HCT116 (cell line): ENCODE measurements at regions of chr15 and their contacts with region 1.

Region 1: GRCh38 chr15:84598969-84599368 is 1.8 kb upstream of the ZSCAN2 start:
- DNase-seq: peak; percentile 44
- ATAC-seq: peak; percentile 25; the same call in 1 of the 2 replicates
- H3K4me3 ChIP-seq: no peak overlapping the region
- H3K27ac ChIP-seq: no peak overlapping the region
- H3K4me1 ChIP-seq: peaks cover 2 to 11% of the 10 kb centered on the region in 2 experiments
- H3K27me3 ChIP-seq: no peaks in the 10 kb centered on the region
- CTCF ChIP-seq: peak; percentile 76 to 86 (median 76); a peak in 5 of 6 replicates
- POLR2A ChIP-seq: no peak
- RAD21 ChIP-seq: peak; percentile 88

Region 2: DNA sequence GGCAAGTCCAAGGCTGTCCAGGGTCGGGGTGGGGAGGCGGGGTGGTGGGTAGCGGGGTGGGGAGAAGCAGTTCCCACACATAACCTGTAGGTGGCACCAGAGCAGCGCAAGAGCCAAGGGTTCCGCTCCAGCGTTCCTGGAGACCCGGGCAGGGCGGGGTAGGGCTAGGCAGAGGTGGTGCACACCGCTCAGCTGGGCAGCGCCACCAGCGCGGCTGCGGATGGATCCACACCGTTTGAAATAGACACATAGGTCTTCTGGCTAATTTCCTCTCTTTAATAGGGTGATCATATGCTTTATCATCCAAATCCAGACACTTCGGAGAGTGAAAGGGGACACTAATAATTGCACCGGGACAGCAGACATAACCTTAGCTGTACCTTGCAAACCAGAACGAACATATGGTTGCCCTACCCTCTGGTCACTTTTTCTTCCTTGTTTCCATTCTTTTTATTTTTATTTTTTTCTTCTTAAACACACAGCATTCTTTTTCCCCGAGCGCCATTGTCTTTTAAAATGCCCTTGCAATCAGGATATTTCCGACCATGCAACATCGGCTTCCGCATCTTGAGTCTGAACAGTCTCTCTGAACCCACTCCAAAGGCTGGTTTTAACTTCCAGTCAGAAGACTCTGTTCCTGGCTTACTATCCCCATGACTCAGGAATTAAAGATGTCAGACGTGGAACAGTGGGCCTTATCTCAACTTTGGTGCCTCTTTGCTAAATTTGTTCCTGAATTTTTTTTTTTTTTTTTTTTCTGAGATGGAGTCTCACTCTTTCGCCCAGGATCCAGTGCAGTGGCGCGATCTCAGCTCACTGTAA is 10.7 kb before region 1 on chr15:
- CTCF ChIA-PET with region 1: interaction called, 12 read pairs
- POLR2A ChIA-PET with region 1: no interaction called
- RAD21 ChIA-PET with region 1: no interaction called
- intact Hi-C with region 1: no loop called
- DNase-seq: peak; percentile 85
- ATAC-seq: peak; percentile 99
- H3K4me3 ChIP-seq: peak overlapping the region; percentile 35 to 47
- H3K27ac ChIP-seq: no peak overlapping the region
- H3K4me1 ChIP-seq: peaks cover 0 to 11% of the 10 kb centered on the region in 2 experiments; a peak in 2 of 4 replicates
- H3K27me3 ChIP-seq: no peaks in the 10 kb centered on the region
- CTCF ChIP-seq: peak; percentile 62 to 72 (median 66)
- POLR2A ChIP-seq: no peak
- RAD21 ChIP-seq: peak; percentile 83

Region 3: DNA sequence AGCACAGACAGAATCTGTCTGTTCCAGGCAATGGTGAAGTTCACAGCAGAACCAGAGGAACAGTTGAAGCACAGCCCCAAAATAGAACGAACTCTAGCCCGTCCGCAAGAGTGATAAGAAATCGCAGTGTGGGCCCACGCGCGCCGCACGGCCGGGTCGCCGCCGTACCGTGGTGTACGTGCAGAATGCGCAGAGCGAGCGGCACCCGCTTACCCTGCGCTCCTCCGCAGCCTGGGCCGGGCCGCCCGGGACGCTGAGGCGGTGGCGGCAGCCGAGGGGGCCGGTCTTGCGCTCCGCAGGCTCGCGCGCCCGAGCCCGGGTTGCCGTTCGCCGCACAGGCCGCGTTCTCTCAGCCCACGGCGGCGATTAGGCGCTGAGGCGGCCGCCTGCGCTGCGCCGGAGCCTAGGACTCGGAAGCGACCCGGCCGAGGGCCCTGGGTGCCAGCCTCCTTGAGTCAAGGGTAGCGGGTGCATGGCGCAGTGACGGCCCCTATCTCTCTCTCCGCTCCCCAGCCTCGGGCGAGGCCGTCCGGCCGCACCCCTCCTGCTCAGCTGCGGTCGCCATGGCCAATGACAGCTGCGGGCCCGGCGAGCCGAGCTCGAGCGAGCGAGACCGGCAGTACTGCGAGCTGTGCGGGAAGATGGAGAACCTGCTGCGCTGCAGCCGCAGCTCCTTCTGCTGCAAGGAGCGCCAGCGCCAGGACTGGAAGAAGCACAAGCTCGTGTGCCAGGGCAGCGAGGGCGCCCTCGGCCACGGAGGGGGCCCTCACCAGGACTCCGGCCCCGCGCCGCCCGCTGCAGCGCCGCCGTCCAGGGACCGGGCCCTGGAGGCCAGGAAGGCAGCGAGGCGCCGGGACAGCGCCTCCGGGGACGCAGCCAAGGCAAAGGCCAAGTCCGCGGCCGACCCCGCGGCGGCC is 34.6 kb after region 1 on chr15:
- CTCF ChIA-PET with region 1: interaction called, 4 read pairs
- POLR2A ChIA-PET with region 1: interaction called, 5 read pairs
- RAD21 ChIA-PET with region 1: no interaction called
- intact Hi-C with region 1: loop called (anchors 5 kb)
- DNase-seq: no peak
- ATAC-seq: peak; percentile 31
- H3K4me3 ChIP-seq: peak overlapping the region; percentile 47 to 60
- H3K27ac ChIP-seq: peak overlapping the region; percentile 69
- H3K4me1 ChIP-seq: peaks cover 8 to 29% of the 10 kb centered on the region in 2 experiments; a peak in 3 of 4 replicates
- H3K27me3 ChIP-seq: no peaks in the 10 kb centered on the region
- CTCF ChIP-seq: no peak
- POLR2A ChIP-seq: no peak
- RAD21 ChIP-seq: no peak

Region 4: DNA sequence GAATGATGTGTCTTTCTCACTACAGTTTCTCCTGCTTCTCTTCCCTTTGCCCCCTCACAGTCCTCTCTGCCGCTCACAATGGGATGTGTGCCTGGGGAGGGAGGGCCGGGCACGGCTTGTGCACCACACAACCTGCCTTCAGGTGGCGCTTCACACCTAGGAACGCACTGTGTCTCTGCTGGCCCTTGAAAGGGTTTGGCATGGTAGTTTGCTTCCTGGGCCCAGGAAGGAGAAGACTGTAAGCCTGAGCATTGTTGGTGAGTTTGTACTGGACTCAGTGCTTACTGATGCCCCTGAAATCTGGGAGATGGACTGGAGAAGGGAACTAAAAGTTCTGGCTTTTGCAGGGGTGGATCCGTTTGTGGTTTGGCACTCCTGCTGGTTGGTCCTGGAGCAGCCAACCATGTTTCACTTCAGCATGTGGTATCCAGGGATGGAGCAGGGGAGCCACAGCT is 227.4 kb after region 1 on chr15:
- CTCF ChIA-PET with region 1: no interaction called
- POLR2A ChIA-PET with region 1: no interaction called
- RAD21 ChIA-PET with region 1: no interaction called
- intact Hi-C with region 1: loop called (anchors 10 kb)
- DNase-seq: peak; percentile 56
- ATAC-seq: peak; percentile 99
- H3K4me3 ChIP-seq: no peak overlapping the region
- H3K27ac ChIP-seq: no peak overlapping the region
- H3K4me1 ChIP-seq: peaks cover 0 to 12% of the 10 kb centered on the region in 2 experiments; a peak in 3 of 4 replicates
- H3K27me3 ChIP-seq: no peaks in the 10 kb centered on the region
- CTCF ChIP-seq: peak; percentile 80 to 92 (median 89)
- POLR2A ChIP-seq: no peak
- RAD21 ChIP-seq: peak; percentile 98